ENCODE measurements at regions of chr11 and their contacts with region 1.

Region 1: GRCh38 chr11:64088162-64089026 is 52.7 kb downstream of the FLRT1 start:
- DNase-seq: no peak
- ATAC-seq: peak; percentile 67
- H3K4me3 ChIP-seq: no peak overlapping the region
- H3K27ac ChIP-seq: peak overlapping the region; percentile 72; the same call in 1 of the 2 replicates
- H3K4me1 ChIP-seq: peaks cover 50% of the 10 kb centered on the region
- H3K27me3 ChIP-seq: no peaks in the 10 kb centered on the region
- CTCF ChIP-seq: peak; percentile 88

Region 2: GRCh38 chr11:64152841-64153691 is 64.7 kb after region 1 on chr11:
- CTCF ChIA-PET with region 1: no interaction called
- POLR2A ChIA-PET with region 1: no interaction called
- in situ Hi-C with region 1: no loop called
- intact Hi-C with region 1: loop called (anchors 5 kb)
- DNase-seq: no peak
- ATAC-seq: peak; percentile 91
- H3K4me3 ChIP-seq: no peak overlapping the region
- H3K27ac ChIP-seq: no peak overlapping the region
- H3K4me1 ChIP-seq: peaks cover 13% of the 10 kb centered on the region
- H3K27me3 ChIP-seq: no peaks in the 10 kb centered on the region
- CTCF ChIP-seq: peak; percentile 100

Measured in Panc1 (cell line).